SK-N-SH (cell line): ENCODE measurements at regions of chr17 and their contacts with region 1.

Region 1: DNA sequence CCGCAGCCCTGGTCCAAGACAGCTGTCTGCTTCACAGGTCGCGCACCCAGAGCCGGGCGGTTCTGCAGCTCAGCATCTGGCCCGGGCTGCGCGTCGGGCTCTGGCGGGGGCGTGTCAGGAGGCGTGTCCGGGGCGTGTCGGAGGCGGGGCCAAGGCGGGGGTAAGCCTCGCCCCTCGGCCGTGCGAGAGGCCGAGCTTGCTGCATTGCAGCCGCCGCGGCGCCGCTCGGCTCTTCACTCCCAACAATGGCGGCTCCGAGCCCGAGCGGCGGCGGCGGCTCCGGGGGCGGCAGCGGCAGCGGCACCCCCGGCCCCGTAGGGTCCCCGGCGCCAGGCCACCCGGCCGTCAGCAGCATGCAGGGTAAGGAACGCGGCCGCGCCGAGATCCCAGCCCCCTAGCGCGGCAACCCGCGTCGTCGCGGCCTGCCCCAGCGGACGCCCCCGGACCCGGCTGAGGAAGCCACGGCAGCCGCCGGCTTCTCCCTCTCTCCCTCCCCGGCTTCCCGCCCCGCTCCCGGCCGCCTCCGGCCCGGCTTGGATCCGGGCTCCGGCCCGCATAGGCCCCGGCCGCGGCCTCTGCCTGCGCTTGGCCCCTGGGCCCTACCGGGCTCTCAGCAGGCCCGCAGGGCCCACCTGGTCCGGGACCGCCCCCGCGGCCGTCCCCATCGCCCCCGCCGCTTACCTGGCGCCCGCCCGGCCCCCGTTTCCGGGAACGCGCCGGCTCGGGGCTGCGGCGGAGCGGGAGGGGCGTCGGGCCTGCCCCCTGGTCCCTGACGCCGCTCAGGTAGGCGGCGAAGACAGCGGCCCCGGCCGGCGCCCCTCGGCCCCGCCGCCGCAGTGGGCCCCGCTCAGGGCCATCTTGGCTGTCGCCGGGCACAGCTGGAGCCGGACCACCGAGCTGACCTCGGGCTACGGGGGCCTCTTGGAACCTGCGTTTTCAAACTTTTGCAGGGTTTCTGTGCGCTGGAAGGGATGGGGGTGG is at the start of gene MAP2K4:
- DNase-seq: peak; percentile 97
- H3K4me3 ChIP-seq: peak within 1 kb of the TSS; percentile 70 to 79
- H3K27ac ChIP-seq: peak within 1 kb of the TSS; percentile 49 to 83
- H3K4me1 ChIP-seq: peaks cover 14 to 17% of the 10 kb centered on the region in 2 experiments; a peak in 3 of 4 replicates
- H3K27me3 ChIP-seq: no peaks in the 10 kb centered on the region
- CTCF ChIP-seq: no peak
- EP300 ChIP-seq: peak in 1 of 2 experiments; percentile 17; a peak in 1 of 4 replicates
- RAD21 ChIP-seq: no peak
- polyA plus RNA-seq, gene MAP2K4: 10.6 and 14.0 TPM in 2 replicates

Region 2: DNA sequence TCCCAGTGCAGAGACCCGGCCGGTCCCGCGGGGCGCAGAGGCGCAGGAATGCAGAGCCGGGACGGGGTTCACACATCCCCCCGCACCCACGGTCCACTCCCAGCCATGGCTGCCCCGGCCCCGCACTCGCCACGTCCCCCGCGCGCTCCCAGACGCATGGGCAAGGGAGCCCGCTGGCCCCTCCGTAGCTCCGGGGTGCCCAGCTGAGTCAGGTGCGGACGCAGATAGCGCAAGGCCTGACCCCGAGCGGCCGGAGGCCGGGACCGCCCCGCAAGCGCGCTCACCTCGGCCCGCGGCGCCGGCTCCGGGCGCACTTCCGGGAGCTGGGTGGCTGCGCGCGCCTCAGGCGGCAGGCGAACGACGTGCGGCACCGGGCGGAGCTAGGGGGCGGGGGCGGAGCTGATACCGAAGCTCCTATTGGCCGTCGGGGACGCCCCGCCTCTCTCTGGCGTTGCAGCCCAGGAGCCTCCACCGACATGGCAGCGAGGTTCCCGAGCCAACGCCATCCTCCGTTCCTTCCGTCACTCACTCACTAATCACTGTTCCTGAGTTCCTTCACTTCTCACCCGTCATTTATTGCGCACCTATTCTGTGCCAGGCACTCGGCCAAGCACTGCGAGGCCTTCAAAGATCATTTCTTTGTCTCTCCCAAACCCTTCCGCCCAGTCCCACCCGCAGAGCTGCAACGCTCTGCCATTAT is 23.6 kb before region 1 on chr17 and contains the start of gene ZNF18:
- CTCF ChIA-PET with region 1: interaction called, 3 read pairs
- POLR2A ChIA-PET with region 1: interaction called, 39 read pairs
- DNase-seq: peak; percentile 97
- H3K4me3 ChIP-seq: peak within 1 kb of the TSS; percentile 90 to 91
- H3K27ac ChIP-seq: peak within 1 kb of the TSS; percentile 87 to 90
- H3K4me1 ChIP-seq: peaks cover 5 to 8% of the 10 kb centered on the region in 2 experiments; a peak in 2 of 4 replicates
- H3K27me3 ChIP-seq: no peaks in the 10 kb centered on the region
- CTCF ChIP-seq: no peak
- EP300 ChIP-seq: no peak; a peak in 1 of 4 replicates
- RAD21 ChIP-seq: no peak
- polyA plus RNA-seq, gene ZNF18: 3.2 and 5.5 TPM in 2 replicates

Region 3: GRCh38 chr17:12107905-12108304 is 87.0 kb after region 1 on chr17:
- CTCF ChIA-PET with region 1: no interaction called
- POLR2A ChIA-PET with region 1: no interaction called
- DNase-seq: no peak
- H3K4me3 ChIP-seq: no peak overlapping the region
- H3K27ac ChIP-seq: no peak overlapping the region
- H3K4me1 ChIP-seq: peaks cover 0 to 27% of the 10 kb centered on the region in 2 experiments; a peak in 3 of 4 replicates
- H3K27me3 ChIP-seq: no peaks in the 10 kb centered on the region
- CTCF ChIP-seq: no peak
- EP300 ChIP-seq: no peak
- RAD21 ChIP-seq: no peak

Region 4: DNA sequence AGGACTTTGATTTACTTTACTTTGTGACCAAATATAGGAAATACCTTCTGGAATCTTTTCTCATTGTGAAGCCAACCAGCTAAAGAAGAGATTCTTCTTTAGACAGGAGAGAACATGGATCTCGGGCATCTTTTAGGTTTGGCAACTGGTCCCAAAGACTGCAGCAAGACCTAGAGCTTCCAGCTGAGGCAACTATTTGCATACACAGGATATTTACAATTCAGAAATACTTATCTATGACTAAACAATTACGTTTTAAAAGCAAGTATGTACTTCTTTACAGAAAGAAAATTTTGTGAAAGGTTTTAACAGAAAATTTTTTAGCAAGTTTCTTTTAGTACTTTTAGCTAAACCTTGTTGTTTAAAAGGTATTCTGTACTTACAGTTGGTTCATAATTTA is 106.2 kb after region 1 on chr17:
- CTCF ChIA-PET with region 1: no interaction called
- POLR2A ChIA-PET with region 1: no interaction called
- DNase-seq: no peak
- H3K4me3 ChIP-seq: no peak overlapping the region
- H3K27ac ChIP-seq: no peak overlapping the region
- H3K4me1 ChIP-seq: no peaks in the 10 kb centered on the region
- H3K27me3 ChIP-seq: no peaks in the 10 kb centered on the region
- CTCF ChIP-seq: no peak
- EP300 ChIP-seq: no peak
- RAD21 ChIP-seq: no peak